Activated CD4-positive, alpha-beta memory T cell treated with anti-CD3 and anti-CD28 coated beads, Interleukin-2, amount 10 ng/mL, durations not matched to agents 7 days and 5 days (primary cell): ENCODE measurements at regions of chr3 and their contacts with region 1.

Region 1: DNA sequence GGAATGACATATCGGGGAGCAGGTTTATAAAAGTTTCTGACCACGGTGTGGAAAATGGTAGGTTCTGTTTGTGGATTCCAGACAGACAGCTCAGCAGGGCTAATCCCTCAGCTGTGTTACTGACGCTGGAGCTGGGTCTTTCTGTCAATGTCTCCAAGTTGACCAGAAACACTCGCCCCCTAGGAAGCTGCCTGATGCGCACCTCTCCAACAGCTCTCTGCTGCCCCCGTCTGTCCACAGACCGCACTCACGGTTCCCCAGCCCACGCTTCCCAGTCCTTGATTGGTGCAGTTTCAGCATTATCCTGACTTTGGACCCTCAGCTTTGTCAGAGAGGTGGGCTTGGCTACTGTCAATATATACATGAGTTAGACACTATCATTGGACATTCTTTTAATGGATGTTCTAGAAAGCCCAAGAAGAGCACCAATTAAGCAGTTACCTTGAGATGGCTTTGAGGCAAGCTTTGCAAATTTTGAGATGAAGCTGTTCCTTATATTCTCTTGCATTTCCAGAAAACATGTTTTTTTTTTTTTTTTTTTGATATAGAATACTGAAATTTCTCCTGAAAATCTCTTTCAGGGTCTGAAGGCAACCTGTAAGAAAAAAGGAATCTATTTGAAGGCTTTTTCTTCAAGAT is 98.9 kb upstream of the TBC1D5 start:
- DNase-seq: peak; percentile 73
- H3K4me3 Mint-ChIP-seq: no peak overlapping the region
- H3K27ac Mint-ChIP-seq: no peak overlapping the region
- H3K4me1 Mint-ChIP-seq: no peaks in the 10 kb centered on the region
- H3K27me3 Mint-ChIP-seq: peaks cover 3% of the 10 kb centered on the region

Region 2: DNA sequence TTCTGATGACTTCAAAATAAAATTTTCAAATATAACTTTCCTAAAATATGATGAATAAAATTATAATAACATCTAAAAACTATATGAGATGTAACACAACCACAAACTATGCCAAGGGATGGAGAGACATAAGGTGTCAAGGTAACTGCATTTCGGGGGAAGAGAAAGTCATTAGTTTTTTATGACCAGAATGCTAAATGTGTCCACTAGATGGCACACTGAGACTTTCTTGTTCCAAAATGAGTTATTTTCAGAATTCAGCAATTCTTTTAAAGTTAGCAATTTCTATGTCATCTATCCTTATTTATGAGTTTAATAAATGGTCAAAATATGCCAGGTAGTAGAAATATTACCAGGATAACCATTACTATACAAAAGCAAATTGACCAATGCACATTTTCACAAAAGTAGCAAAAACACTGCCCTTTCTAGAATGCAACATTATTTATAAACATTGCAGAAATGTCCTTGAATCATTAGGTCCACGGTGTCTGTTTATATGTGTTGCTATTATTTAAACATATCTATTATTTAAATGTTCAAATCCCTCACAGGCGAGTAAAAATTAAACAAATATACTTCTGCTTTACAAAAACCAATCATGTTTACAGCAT is 582.4 kb before region 1 on chr3:
- CTCF ChIA-PET with region 1: interaction called, 14 read pairs
- POLR2A ChIA-PET with region 1: no interaction called
- DNase-seq: no peak
- H3K4me3 Mint-ChIP-seq: no peak overlapping the region
- H3K27ac Mint-ChIP-seq: no peak overlapping the region
- H3K4me1 Mint-ChIP-seq: no peaks in the 10 kb centered on the region
- H3K27me3 Mint-ChIP-seq: no peaks in the 10 kb centered on the region

Region 3: GRCh38 chr3:17431004-17431403 is 410.3 kb before region 1 on chr3:
- CTCF ChIA-PET with region 1: interaction called, 28 read pairs
- POLR2A ChIA-PET with region 1: interaction called, 3 read pairs
- DNase-seq: no peak
- H3K4me3 Mint-ChIP-seq: no peak overlapping the region
- H3K27ac Mint-ChIP-seq: no peak overlapping the region
- H3K4me1 Mint-ChIP-seq: no peaks in the 10 kb centered on the region
- H3K27me3 Mint-ChIP-seq: no peaks in the 10 kb centered on the region

Region 4: DNA sequence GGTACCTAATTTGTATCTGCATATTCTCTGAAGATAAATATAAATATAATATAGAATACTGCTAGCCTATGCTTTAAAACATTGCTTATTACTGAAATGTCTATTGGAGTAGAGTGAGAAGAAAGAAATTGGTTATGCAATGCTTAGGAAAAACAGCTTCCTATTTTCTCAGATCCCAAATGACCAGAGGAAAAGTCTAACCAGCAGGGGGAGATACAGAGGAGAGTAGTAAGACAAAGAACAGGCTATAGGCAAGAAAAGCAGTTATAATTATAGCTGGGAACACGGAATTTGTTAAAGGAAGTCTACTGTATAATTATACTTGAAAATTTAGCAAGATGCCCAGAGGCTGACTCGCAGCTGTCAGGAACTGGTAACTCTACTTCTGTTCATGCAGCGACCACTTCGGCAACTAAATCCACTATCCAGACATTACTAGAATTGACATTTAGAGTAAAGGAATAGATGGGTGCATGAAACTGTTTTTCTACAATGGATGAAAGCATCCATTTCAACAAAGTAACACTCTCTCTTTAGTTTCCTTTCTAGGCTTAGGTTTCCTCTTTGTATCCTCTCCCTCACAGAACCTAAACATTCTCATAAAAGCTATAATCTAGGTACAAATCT is 196.1 kb before region 1 on chr3:
- CTCF ChIA-PET with region 1: interaction called, 38 read pairs
- POLR2A ChIA-PET with region 1: interaction called, 7 read pairs
- DNase-seq: no peak
- H3K4me3 Mint-ChIP-seq: no peak overlapping the region
- H3K27ac Mint-ChIP-seq: no peak overlapping the region
- H3K4me1 Mint-ChIP-seq: no peaks in the 10 kb centered on the region
- H3K27me3 Mint-ChIP-seq: no peaks in the 10 kb centered on the region

Region 5: GRCh38 chr3:17935222-17935621 is 93.9 kb after region 1 on chr3:
- CTCF ChIA-PET with region 1: no interaction called
- POLR2A ChIA-PET with region 1: no interaction called
- DNase-seq: no peak
- H3K4me3 Mint-ChIP-seq: no peak overlapping the region
- H3K27ac Mint-ChIP-seq: no peak overlapping the region
- H3K4me1 Mint-ChIP-seq: no peaks in the 10 kb centered on the region
- H3K27me3 Mint-ChIP-seq: peaks cover 20% of the 10 kb centered on the region